Adrenal gland (tissue), 19 donors: ENCODE measurements at regions of chr10 and their contacts with region 1.

Region 1: GRCh38 chr10:98309366-98310355 is 41.7 kb upstream of the LOXL4 start:
- DNase-seq: peak; percentile 72 to 91 (median 80)
- H3K4me3 ChIP-seq: no peak overlapping the region
- H3K27ac ChIP-seq: peak overlapping the region in 1 of 5 donors; percentile 19
- H3K4me1 ChIP-seq: peaks cover 6 to 20% of the 10 kb centered on the region in 2 donors
- H3K27me3 ChIP-seq: no peaks in the 10 kb centered on the region
- CTCF ChIP-seq: peak; percentile 66 to 86 (median 82)
- POLR2A ChIP-seq: no peak

Region 2: GRCh38 chr10:98045785-98046389 is 263.8 kb before region 1 on chr10:
- intact Hi-C with region 1: loop called in 1 of 2 experiments (anchors 10 kb)
- DNase-seq: peak; percentile 36 to 67 (median 51)
- H3K4me3 ChIP-seq: no peak overlapping the region
- H3K27ac ChIP-seq: no peak overlapping the region
- H3K4me1 ChIP-seq: no peaks in the 10 kb centered on the region
- H3K27me3 ChIP-seq: peaks cover 3% of the 10 kb centered on the region
- CTCF ChIP-seq: peak; percentile 53 to 89 (median 67)
- POLR2A ChIP-seq: no peak

Region 3: DNA sequence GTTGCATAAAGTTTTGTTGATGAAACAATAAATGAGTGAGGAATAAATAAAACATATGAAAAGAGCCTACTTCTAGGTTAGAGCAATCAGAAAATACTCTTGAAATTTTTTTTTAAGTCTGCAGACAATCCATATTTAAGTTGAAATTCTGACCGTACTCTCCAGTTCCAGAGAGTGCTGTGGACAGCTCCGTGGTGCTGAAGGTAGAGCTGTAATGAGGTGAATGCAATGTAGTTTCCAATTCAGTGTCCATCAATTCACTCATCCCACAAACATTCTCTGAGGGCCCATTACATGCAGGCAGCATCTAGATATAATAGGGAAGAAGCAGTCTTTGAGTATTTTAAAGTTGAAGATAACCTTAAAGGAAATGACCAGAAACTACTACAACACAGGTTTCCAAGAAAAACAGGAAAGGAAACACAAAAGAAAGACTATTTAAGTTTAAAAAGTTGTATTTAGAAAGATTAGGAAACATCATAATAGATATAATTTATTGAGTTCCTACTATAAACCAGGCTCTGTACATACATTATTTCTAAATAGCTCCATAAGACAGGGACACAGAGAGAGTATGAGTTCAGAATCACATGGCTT is 235.2 kb before region 1 on chr10:
- intact Hi-C with region 1: no loop called
- DNase-seq: peak in 4 of 7 donors; percentile 12 to 28 (median 19)
- H3K4me3 ChIP-seq: no peak overlapping the region
- H3K27ac ChIP-seq: no peak overlapping the region
- H3K4me1 ChIP-seq: no peaks in the 10 kb centered on the region
- H3K27me3 ChIP-seq: peaks cover 8% of the 10 kb centered on the region
- CTCF ChIP-seq: no peak
- POLR2A ChIP-seq: no peak

Region 4: DNA sequence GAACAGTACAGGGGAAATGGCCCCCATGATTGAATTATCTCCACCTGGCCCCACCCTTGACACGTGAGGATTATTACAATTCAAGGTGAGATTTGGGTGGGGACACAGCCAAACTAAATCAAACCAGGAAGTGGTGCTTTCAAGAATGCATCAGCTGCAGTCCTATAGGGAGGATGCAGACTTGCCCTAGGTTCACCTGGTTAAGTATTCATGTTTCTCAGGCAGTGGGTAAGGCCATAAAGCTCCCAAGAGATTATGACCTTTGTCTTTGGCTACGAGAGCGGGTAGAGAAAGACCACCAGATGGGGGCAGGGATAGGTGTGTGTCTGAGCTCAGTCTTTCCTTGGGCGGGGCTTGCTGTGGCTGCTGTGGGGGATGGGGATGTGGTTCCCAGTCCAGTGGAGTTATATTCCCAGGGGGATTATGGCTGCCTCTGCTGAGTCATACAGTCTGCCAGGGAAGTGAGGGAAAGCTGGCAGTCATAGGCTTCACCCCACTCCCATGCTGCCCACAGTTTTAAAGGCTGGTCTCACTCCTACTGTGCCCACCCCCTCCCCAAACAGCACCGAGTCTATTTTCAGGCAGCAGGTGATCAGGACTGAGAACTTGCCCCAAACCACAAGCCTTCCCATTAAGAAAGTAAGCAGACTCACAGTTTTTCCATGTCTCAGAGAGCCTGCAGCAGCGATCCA is 183.6 kb before region 1 on chr10:
- intact Hi-C with region 1: no loop called
- DNase-seq: no peak
- H3K4me3 ChIP-seq: no peak overlapping the region
- H3K27ac ChIP-seq: no peak overlapping the region
- H3K4me1 ChIP-seq: no peaks in the 10 kb centered on the region
- H3K27me3 ChIP-seq: peaks cover 12% of the 10 kb centered on the region
- CTCF ChIP-seq: no peak
- POLR2A ChIP-seq: no peak

Region 5: DNA sequence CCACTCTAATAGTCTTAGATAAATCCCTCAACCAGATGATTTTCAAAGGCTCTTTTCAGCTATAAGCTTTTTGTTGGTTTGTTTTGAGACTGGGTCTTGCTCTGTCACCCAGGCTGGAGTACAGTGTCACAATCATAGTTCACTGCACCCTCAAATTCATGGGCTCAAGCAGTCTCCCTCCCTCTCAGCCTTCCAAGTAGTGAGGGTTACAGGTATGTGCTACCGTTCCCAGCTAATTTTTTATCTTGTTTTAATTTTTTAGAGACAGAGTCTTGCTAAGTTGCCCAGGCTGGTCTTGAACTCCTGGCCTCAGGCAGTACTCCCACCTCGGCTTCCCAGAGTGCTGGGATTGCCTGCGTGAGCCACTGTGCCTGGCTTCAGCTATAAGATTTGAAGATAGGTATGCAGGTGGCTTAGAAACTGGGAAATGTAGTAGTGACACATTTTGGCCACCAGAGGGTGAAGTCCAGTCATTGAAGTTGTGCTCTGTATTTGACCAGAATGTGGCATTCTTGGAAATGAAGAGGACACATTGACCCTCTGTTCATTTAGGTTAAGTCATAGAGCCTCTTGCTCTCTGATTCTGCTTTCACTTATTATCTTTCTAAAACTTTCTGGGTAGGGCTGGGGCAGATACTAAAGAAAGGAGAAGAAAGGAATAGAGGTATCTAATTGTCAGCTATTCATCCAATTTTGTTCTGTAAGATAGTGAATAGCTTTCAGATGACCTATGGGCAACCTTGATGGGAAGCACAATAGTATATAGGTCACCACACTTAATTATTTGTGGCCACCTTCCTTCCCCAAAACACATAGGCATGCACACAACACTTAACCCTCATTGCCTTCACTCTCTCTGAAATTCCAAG is 139.2 kb before region 1 on chr10:
- intact Hi-C with region 1: loop called (anchors 5 to 10 kb)
- DNase-seq: peak; percentile 20 to 73 (median 37)
- H3K4me3 ChIP-seq: no peak overlapping the region
- H3K27ac ChIP-seq: no peak overlapping the region
- H3K4me1 ChIP-seq: no peaks in the 10 kb centered on the region
- H3K27me3 ChIP-seq: no peaks in the 10 kb centered on the region
- CTCF ChIP-seq: peak; percentile 69 to 81 (median 74)
- POLR2A ChIP-seq: no peak

Region 6: DNA sequence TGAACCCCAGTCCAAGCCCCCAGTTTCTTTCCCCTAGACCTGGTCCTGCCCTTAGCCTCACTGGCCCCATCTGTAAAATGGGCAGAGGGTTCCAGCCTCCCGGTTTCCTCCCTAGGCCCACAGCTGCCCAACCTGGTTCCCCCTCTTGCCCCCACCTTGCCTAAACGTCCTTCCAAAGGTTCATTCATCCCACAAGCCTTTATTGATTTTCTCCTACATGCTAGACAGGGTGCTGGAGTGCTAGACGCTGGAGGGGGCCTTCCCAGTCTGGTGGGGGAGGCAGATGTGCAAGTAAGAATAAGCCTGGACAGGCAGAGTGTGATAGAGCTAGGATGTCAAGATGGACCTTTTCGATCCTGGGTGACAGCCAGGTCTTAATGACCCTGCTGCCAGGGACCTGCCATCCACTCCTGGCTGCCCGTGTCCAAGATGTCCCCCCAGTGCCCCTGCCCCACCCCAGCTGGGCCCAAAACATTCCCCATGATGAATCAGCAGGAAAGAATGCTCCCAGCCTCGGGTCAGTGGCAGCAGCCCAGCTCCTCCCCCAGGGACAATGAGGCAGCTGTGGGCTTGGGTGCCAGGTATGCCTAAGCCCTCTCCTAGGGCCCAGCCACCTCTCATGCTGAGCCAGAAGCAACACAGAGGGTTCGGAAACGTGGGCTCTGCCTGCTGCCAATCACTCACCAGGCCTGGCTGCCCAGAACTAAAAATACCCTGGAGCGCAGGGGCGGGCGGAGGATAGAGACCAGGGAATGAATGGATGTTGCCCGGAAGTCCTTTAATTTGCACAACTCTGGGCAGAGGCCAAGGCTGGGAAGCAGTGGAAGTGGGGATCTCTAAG is 40.4 kb before region 1 on chr10:
- intact Hi-C with region 1: loop called in 1 of 2 experiments (anchors 5 kb)
- DNase-seq: peak; percentile 56 to 91 (median 87)
- H3K4me3 ChIP-seq: peak overlapping the region in 1 of 4 donors; percentile 15
- H3K27ac ChIP-seq: peak overlapping the region in 2 of 5 donors; percentile 24 to 87
- H3K4me1 ChIP-seq: peaks cover 14 to 20% of the 10 kb centered on the region in 2 donors
- H3K27me3 ChIP-seq: no peaks in the 10 kb centered on the region
- CTCF ChIP-seq: no peak
- POLR2A ChIP-seq: no peak

Region 7: GRCh38 chr10:98433881-98434732 is 124.4 kb after region 1 on chr10:
- intact Hi-C with region 1: no loop called
- DNase-seq: peak in 5 of 7 donors; percentile 47 to 72 (median 59)
- H3K4me3 ChIP-seq: no peak overlapping the region
- H3K27ac ChIP-seq: no peak overlapping the region
- H3K4me1 ChIP-seq: peaks cover 0 to 3% of the 10 kb centered on the region in 2 donors
- H3K27me3 ChIP-seq: no peaks in the 10 kb centered on the region
- CTCF ChIP-seq: no peak
- POLR2A ChIP-seq: no peak